Sciatic nerve (tissue), 2 donors: ENCODE measurements at regions of chr20 and their contacts with region 1.

Region 1: DNA sequence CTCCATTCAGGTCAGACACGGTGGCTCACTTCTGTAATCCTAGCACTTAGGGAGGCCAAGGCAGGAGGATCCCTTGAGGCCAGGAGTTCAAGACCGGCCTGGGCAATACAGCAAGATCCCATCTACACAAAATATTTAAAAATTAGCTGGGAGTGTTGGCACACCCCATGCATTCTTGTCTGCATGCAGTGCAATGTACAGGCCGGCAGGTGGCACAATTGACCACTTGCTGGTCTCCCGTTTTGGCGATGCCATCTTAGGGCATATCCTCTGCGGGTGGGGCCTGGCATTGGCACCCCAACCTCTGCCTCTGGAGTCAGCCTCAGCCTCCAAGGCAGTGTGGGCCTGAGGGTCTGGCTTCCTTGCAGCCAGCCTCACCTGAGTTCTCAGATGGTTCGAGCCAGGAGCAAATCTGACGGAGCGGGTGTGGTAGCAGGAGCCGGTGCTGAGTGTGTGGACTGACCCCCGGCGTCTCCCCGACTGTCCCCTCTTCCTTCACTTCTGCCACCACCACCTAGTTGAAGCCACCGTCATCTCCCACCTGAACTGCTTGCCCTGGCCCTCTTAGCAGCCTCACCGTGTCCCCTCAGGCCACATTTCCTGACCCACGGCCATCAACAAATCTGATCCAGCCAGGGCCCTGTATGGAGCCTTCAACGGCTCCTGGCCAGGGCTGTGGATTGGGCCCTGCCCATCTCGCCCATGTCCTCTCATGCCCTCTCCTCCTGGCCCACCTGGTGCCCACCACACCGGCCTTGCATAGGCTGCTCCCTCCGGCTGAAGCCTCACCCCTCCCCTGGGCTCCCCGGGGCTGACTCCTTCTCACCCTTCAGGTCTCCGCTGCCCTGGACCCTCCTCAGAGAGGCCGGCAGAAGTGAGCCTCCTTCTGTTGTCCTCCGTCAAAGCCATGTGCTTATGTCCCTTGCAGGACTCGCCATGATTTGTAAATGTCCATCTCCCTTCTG is 44.0 kb downstream of the EFCAB8 start:
- DNase-seq: peak; percentile 70
- ATAC-seq: peak; percentile 72

Region 2: DNA sequence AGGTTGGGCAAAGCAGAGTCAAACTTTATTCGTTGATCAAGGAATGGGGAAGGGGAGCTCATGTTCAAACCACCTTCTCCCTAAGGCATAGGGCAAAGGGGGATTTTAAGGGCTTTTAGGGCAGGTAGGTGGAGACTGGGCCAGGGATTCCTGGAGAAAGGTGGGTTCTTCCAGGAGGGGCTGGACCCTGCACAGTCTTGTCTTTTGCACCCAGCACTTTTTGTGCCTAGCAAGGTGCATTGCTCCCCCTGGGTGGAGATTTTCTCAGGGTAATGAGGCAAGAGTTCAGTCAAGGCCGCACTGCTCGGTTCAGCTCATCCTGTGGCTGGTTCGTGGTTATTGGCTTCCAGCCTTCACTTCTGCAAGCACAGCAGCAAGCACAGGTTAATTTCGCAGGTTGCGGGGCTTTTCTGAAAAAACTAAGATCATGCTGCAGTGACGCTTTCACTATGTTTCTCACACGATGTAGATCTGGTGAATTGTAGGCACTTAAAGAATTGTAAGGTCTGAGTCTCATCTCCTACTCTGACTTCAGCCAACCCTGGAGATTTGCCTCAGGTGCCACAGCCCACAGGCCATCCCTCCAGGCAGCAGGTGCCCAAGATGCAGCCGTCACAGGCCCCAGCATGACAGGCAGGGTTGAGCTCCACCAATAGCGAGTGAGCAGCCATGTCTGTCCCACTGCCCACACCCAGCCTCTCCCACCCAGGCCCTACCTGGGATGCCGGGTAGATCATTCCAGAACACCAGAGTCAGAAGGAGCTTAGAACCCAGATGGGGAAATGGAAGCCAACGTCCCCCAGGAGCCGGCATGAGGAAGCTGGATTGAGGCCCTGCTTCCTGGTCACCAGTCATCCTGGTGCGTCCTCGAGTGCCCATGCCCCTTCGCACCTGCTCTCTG is 64.4 kb after region 1 on chr20:
- intact Hi-C with region 1: no loop called
- DNase-seq: peak; percentile 18
- ATAC-seq: no peak

Region 3: DNA sequence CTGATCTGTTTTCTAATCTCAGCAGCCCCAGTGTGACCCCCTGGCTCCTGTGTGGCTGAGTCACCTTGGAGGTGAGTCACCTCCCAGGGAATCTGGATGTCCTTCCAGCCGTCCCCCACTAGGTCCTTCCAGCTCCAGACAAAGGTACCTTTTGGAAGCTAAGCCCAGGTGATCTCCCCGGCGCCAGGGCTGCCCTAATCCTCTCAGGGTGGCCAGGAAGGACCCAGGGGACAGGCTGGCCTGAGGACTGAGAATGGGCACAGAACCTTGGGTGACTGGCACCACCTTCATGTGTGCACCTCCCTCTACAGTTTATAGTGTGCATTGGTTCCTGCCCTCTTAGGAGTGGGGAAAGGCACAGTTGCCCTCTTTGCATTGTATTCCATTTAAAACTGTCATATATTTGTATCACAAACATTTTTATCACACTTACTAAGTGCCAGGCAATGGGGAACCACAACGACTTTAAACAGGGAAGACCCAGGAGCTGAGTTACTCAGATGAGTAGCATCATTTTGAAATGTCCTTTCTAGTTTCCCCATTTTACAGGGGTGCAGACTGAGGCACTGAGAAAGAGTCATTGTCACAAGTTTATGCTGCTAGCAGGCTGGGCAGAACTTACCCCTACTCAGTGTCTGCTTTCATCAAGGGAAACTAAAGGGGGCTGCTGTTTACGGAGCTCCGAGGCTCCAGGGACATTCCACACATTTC is 174.1 kb after region 1 on chr20:
- intact Hi-C with region 1: loop called (anchors 10 kb)
- DNase-seq: no peak
- ATAC-seq: no peak

Region 4: DNA sequence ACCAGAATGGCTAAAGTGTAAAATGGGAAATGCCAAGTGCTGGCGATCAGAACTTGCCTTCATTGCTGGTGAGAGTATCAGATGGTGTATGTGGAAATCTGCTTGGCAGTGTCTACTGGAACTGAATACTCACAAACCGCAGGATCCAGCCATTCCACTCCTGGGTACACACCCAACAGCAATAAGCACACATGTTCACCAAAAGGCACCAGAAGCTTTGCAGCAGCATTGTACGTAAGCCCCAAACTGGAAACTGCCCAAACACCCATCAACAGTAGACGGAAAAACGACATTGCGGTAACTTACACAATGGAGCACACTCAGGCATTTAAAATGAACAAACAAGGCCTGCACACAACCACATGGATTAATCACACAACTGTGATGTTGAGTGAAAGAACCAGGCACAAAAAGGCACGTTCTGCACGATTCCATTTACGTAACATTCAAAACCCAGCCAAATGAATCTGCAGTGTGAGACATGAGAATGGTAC is 227.9 kb after region 1 on chr20:
- intact Hi-C with region 1: no loop called
- DNase-seq: no peak
- ATAC-seq: peak; percentile 46

Region 5: DNA sequence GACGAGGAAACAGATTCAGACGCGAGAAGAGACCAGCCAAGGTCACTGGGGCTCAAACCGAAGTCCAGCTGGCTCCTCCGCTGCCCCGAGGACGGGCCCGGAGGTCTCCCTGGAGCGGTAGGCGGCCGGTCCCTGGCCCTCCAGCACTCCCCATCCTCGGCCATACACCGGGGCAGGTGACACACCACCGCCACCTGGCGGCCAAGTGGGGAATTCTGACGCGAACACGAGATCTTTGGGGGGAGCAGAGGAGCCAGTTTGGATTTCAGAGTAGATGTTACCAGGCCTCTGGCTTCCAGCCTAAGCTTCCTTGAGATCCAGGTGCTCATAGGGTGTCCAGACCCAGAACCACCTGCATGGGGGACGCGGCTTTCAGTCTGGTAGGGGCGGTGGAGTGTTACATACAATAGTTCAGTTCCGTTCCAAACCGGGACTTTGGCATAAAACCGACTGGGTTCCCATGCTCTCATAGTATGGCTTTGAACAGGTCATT is 396.4 kb after region 1 on chr20:
- intact Hi-C with region 1: loop called (anchors 10 kb)
- DNase-seq: peak; percentile 78
- ATAC-seq: peak; percentile 80